ENCODE measurements at regions of chr12 and their contacts with region 1.

Region 1: DNA sequence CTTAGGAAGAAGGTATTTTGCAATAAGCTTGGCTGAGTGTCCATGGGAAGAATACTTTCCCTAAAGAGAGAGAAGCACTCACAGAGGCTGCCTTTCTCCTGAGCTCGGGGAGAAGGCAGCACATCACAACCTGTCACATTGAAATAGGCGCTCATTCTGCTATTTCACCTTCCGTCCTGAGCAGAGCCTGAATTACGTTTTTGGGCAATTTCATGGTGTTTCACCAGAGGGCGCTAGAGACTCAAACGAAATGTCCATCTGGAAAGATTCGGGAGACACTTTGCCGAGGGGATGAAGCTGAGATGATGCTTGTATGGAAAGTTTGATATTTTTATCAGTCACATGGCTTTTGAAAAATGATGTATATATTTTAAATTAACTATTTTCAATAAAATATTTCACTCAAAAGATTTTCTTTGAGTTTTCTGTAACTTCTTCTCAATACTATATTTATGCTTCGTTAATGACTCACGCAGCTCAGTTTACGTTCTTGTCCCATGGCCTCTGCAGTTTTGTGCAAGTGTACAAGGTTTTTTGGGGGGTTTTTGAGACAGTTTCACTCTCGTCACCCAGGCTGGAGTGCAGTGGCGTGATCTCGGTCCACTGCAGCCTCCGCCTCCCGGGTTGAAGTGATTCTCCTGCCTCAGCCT is 17.4 kb upstream of the B4GALNT3 start:
- DNase-seq: peak in 1 of 2 experiments; percentile 88
- H3K4me3 ChIP-seq: no peak overlapping the region
- H3K27ac ChIP-seq: no peak overlapping the region
- H3K4me1 ChIP-seq: no peaks in the 10 kb centered on the region
- H3K27me3 ChIP-seq: no peaks in the 10 kb centered on the region
- CTCF ChIP-seq: peak; percentile 41 to 86 (median 76)
- EP300 ChIP-seq: no peak
- POLR2A ChIP-seq: no peak
- RAD21 ChIP-seq: peak; percentile 64 to 77

Region 2: GRCh38 chr12:337039-337438 is 105.3 kb before region 1 on chr12:
- CTCF ChIA-PET with region 1: no interaction called
- POLR2A ChIA-PET with region 1: no interaction called
- DNase-seq: no peak
- H3K4me3 ChIP-seq: no peak overlapping the region
- H3K27ac ChIP-seq: no peak overlapping the region
- H3K4me1 ChIP-seq: no peaks in the 10 kb centered on the region
- H3K27me3 ChIP-seq: no peaks in the 10 kb centered on the region
- CTCF ChIP-seq: no peak
- EP300 ChIP-seq: no peak
- POLR2A ChIP-seq: no peak
- RAD21 ChIP-seq: no peak

Region 3: DNA sequence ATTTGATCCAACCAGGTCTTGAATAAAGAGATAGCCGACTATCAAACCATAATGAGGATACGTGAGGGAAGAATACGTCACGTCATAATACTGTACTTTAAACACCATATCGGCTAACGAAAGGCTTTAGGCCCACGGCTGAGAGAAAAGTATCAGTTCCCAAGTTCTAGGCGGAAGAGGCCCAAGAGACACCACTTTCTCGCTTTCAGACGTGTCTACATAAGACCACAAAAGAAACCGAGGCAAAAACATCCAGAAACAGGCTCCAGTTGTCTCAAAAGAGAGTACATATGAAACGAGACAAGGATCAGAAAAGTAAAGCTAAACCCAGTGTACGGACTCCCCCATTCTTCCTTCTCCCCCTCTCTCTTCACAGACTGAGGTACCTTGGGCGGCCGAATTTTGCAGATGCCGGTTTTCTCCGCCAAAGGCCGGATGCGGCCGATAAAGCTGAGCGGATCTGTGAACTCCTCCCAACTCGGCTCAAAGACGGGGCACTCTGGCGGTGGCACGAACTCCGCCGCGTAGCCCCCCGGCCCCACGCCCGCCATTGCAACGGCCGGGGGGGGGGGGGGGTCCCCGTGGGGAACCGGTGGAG is 53.7 kb before region 1 on chr12:
- CTCF ChIA-PET with region 1: no interaction called
- POLR2A ChIA-PET with region 1: no interaction called
- DNase-seq: no peak
- H3K4me3 ChIP-seq: peak overlapping the region; percentile 86 to 98 (median 94)
- H3K27ac ChIP-seq: peak overlapping the region; percentile 95
- H3K4me1 ChIP-seq: no peaks in the 10 kb centered on the region; a peak in 2 of 7 replicates
- H3K27me3 ChIP-seq: no peaks in the 10 kb centered on the region
- CTCF ChIP-seq: no peak
- EP300 ChIP-seq: no peak
- POLR2A ChIP-seq: peak in 1 of 2 experiments; percentile 23; a peak in 1 of 3 replicates
- RAD21 ChIP-seq: no peak

Region 4: DNA sequence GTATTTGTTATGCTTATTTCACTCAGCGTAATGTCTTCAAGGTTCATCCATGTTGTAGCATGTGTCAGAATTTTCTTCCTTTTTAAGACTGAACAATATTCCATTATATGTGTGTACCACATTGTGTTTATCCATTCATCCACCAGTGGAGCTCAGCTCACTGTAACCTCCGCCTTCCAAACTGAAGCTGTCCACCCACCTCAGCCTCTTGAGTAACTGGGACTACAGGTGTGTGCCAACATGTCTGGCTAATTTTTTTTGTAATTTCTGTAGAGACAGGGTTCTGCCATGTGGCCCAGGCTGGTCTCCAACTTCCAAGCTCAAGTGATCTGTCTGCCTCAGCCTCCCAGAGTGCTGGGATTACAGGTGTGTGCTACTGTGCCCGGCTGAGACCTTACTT is 19.8 kb before region 1 on chr12:
- CTCF ChIA-PET with region 1: interaction called, 20 read pairs
- POLR2A ChIA-PET with region 1: no interaction called
- DNase-seq: no peak
- H3K4me3 ChIP-seq: no peak overlapping the region
- H3K27ac ChIP-seq: no peak overlapping the region
- H3K4me1 ChIP-seq: no peaks in the 10 kb centered on the region
- H3K27me3 ChIP-seq: no peaks in the 10 kb centered on the region
- CTCF ChIP-seq: no peak
- EP300 ChIP-seq: no peak
- POLR2A ChIP-seq: no peak
- RAD21 ChIP-seq: no peak

Region 5: GRCh38 chr12:530308-530707 is 87.9 kb after region 1 on chr12:
- CTCF ChIA-PET with region 1: interaction called, 163 read pairs
- POLR2A ChIA-PET with region 1: no interaction called
- DNase-seq: no peak
- H3K4me3 ChIP-seq: no peak overlapping the region
- H3K27ac ChIP-seq: no peak overlapping the region
- H3K4me1 ChIP-seq: peaks cover 0 to 3% (median 0%) of the 10 kb centered on the region in 4 experiments; a peak in 1 of 7 replicates
- H3K27me3 ChIP-seq: no peaks in the 10 kb centered on the region
- CTCF ChIP-seq: no peak
- EP300 ChIP-seq: no peak
- POLR2A ChIP-seq: no peak
- RAD21 ChIP-seq: no peak

Region 6: DNA sequence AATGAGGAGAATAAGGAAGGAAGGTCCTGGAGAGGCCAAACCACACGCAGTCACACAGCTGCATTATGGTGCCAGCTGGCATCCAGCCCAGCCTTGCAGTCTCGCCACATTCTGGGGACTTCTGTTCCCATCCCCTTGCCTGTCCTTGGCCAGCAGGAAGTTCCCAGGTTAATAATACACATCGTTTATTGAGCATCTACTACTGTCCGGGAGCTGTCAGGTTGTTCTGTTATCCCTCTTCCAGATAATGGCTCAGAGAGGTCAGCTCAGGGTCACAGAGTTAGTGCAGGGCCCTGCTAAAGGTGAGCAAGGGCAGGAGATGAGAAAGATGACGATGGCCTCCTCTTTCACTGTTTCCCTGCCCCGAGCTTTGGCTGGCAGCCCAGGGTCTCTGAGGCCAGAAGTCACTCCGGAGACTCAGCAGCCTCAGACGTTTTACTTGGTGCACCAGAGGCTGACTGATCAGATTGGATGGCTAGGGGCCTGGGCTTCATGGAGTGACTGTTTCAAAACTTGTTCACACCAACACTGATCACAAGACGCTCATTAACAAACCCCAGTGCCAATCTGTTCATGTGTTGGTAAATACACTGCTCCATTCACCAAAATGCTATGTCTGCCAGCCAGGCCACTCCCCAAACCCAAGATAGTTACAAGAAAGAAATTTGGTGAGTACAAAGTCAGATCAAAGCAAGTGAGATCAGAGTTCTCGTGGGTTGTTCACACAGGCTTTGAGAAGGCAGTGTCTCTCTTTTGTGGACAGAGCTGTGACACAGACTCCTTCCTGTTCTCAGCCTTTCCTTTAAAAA is 96.6 kb after region 1 on chr12:
- CTCF ChIA-PET with region 1: interaction called, 163 read pairs
- POLR2A ChIA-PET with region 1: interaction called, 4 read pairs
- DNase-seq: no peak
- H3K4me3 ChIP-seq: no peak overlapping the region
- H3K27ac ChIP-seq: no peak overlapping the region
- H3K4me1 ChIP-seq: peaks cover 0 to 20% (median 9%) of the 10 kb centered on the region in 4 experiments; a peak in 5 of 7 replicates
- H3K27me3 ChIP-seq: no peaks in the 10 kb centered on the region
- CTCF ChIP-seq: no peak
- EP300 ChIP-seq: no peak
- POLR2A ChIP-seq: no peak
- RAD21 ChIP-seq: no peak

Region 7: DNA sequence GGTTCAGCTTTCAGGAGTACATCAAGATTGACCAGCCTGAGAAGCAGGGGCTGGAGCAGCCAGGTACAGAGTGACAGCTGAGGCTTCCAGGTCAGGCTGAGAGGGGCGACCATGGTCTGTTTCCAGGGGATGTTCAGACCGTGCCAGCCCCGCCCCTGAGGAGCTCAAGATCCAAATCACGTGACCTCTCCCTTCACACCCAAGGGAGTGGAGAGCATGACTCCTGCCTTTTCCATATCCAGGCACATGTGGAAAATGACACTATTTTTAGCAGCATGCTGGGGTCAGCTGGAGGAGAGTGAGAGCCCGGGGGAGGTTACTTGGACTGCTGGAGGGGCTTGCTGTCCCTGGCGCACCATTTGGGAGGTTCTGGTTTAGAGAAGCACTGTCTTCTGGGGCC is 110.1 kb after region 1 on chr12:
- CTCF ChIA-PET with region 1: interaction called, 150 read pairs
- POLR2A ChIA-PET with region 1: interaction called, 8 read pairs
- DNase-seq: no peak
- H3K4me3 ChIP-seq: no peak overlapping the region
- H3K27ac ChIP-seq: no peak overlapping the region
- H3K4me1 ChIP-seq: no peaks in the 10 kb centered on the region
- H3K27me3 ChIP-seq: no peaks in the 10 kb centered on the region
- CTCF ChIP-seq: no peak
- EP300 ChIP-seq: no peak
- POLR2A ChIP-seq: no peak
- RAD21 ChIP-seq: no peak

Region 8: DNA sequence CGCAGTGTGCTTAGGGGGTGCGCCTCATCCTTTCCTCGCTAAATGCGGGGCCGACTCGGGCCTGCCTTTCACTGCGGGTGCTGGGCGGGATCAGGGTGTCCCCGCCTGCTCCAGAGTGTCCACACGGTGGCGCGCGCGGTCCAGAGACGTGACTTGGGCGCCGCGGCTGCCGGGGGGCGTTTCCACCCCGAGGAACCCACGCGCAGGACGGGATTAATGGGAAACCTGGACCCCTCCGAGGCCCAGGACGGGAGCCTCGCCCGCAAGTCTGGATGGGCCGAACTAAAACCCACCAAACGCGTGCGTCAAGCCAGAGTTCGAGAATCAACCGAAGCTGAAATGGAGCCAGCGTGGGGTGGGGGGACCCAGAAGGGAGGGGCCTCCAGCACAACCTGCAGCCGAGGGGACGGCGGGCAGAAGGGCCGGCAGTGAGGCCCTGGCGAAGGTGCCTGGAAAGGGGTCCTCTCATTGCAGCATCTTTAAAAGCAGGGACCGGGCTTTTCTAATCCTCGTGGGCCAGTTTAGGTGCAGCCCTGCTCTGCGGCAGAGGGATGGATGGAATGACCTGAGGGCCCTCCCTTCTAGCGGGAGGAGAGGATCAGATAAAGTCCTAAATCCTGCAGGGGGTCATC is 127.6 kb after region 1 on chr12:
- CTCF ChIA-PET with region 1: interaction called, 10 read pairs
- POLR2A ChIA-PET with region 1: no interaction called
- DNase-seq: peak in 1 of 2 experiments; percentile 95
- H3K4me3 ChIP-seq: peak overlapping the region; percentile 28 to 82 (median 64)
- H3K27ac ChIP-seq: no peak overlapping the region
- H3K4me1 ChIP-seq: peaks cover 0 to 9% (median 6%) of the 10 kb centered on the region in 4 experiments; a peak in 5 of 7 replicates
- H3K27me3 ChIP-seq: peaks cover 0 to 4% (median 3%) of the 10 kb centered on the region in 4 experiments; a peak in 2 of 7 replicates
- CTCF ChIP-seq: peak in 2 of 3 experiments; percentile 86; a peak in 3 of 4 replicates
- EP300 ChIP-seq: no peak
- POLR2A ChIP-seq: no peak
- RAD21 ChIP-seq: peak; percentile 86 to 88

Region 9: DNA sequence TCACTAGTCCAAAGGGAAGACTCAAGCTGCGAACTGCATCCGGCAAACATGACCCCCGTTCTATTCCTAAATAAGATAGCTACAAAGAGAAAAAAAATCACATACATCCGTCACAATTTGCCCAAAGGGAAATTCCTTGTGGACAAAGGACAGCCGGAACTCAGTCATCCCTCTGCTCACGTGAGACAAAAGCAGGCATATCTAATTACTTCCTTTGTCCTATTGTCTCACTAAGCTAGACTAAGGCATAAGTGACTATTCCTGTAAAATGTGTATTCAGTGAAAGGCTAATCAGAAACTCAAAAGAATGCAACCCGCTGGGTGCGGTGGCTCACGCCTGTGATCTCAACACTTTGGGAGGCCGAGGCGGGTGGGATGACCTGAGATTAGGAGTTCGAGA is 248.1 kb after region 1 on chr12:
- CTCF ChIA-PET with region 1: no interaction called
- POLR2A ChIA-PET with region 1: no interaction called
- DNase-seq: no peak
- H3K4me3 ChIP-seq: no peak overlapping the region
- H3K27ac ChIP-seq: no peak overlapping the region
- H3K4me1 ChIP-seq: peaks cover 0 to 2% (median 0%) of the 10 kb centered on the region in 4 experiments; a peak in 2 of 7 replicates
- H3K27me3 ChIP-seq: no peaks in the 10 kb centered on the region
- CTCF ChIP-seq: no peak
- EP300 ChIP-seq: no peak
- POLR2A ChIP-seq: no peak
- RAD21 ChIP-seq: no peak